RWPE1 (cell line): ENCODE measurements at regions of chr2 and their contacts with region 1.

Region 1: DNA sequence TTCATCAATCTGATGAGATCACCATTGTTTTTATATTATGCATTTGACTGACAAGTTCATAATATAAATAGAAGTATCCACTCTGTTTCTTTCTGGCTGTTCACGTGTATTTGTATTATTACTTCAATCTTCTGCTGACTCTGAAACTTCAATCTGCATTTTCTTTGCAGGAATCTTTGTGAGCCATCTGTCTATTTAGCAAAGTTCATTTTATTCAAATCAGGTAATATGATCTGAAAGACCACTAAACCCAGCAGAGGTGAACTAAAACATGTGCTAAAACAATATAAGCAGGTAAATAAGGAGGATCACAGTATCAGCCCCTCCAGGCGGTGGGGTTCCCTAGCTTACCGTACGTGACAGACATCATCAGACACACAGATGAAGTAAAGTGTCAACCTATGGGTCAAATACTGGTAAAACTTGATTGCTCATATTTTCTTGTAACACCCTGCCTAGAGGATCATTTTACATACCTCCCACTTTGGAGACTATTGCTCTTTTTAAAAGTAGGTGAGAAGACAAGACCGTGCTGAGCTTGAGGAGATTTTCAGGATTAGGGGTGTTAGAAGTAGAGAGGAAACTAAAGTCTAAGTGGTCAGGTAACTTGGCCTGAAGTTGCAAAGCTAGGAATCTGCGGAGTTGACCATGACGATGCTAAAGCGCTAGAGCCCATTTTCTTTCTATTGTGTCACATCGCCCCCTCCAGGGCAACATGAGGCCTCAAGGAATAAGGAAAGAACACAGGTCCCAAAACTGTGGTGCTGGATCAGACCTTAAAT is 9.0 kb downstream of the DTNB start:
- DNase-seq: no peak
- H3K27ac ChIP-seq: no peak overlapping the region
- CTCF ChIP-seq: peak; percentile 32

Region 2: GRCh38 chr2:24164125-24164973 is 1500.0 kb before region 1 on chr2:
- CTCF ChIA-PET with region 1: no interaction called
- POLR2A ChIA-PET with region 1: no interaction called
- DNase-seq: peak; percentile 39
- H3K27ac ChIP-seq: no peak overlapping the region
- CTCF ChIP-seq: peak; percentile 57

Region 3: GRCh38 chr2:25606892-25607291 is 57.5 kb before region 1 on chr2:
- CTCF ChIA-PET with region 1: interaction called, 14 read pairs
- POLR2A ChIA-PET with region 1: no interaction called
- DNase-seq: peak; percentile 50
- H3K27ac ChIP-seq: no peak overlapping the region
- CTCF ChIP-seq: peak; percentile 74